Common myeloid progenitor, CD34-positive (primary cell): ENCODE measurements at regions of chr9 and their contacts with region 1.

Region 1: GRCh38 chr9:89549031-89549644 is 51.2 kb upstream of the SEMA4D start:
- DNase-seq: peak; percentile 81 to 88 (median 83)
- H3K4me3 ChIP-seq: no peak overlapping the region
- H3K27ac ChIP-seq: no peak overlapping the region
- H3K4me1 ChIP-seq: peaks cover 0 to 21% (median 12%) of the 10 kb centered on the region in 4 experiments
- H3K27me3 ChIP-seq: no peaks in the 10 kb centered on the region

Region 2: DNA sequence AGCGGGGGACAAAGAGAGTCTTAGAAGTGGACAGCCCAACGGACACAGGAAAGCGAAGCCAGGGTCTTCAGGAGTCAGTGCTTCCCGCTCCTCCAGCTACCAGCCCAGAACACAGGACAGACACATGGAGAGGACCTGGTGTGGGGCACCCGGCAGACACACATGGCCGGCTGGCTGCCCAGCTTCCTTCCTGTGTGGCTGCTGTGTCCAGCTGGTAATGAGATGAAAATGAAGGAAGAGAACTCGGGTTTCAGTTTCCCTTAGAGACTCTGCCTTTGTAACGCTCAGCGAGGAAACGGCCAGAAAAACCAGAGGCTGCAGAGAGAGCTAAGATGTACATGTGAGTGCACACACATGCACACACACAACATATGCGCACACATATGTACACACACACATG is 143.3 kb before region 1 on chr9:
- CTCF ChIA-PET with region 1: interaction called, 10 read pairs
- POLR2A ChIA-PET with region 1: no interaction called
- DNase-seq: peak in 2 of 3 donors; percentile 68 to 69
- H3K4me3 ChIP-seq: peak overlapping the region in 3 of 7 experiments; percentile 15 to 35 (median 29)
- H3K27ac ChIP-seq: peak overlapping the region; percentile 10 to 60
- H3K4me1 ChIP-seq: peaks cover 29 to 81% (median 70%) of the 10 kb centered on the region in 4 experiments
- H3K27me3 ChIP-seq: no peaks in the 10 kb centered on the region

Region 3: DNA sequence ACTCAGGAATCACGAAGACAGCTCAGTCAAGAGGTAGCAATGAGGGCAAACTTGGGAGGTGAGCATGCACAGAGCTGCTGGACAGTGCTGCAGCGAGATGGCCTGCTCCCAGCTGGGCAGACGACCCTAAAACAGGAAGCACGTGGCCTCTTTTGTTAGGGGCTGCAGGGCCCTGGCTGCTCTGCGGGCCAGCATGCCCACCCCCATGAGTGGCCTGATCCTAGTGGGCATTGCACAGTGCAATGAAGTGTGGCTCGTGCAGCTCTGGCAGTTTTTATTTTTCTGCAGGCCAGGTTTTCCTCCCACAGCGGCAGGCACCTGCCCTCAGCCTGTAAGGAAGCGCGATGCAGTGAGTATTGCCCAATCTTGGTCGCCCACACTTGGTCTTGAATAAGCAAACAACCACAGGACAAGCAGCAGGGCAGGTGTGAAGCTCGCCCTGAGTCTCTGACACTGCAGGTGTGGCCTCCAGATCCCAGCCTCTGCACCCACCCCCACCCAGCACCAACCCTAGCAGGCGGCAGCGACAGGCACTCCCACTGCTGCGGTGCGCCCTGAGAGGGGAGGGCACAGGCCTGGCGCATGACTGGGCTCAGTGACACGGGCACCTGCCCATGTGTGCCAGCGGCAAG is 112.0 kb before region 1 on chr9:
- CTCF ChIA-PET with region 1: interaction called, 106 read pairs
- POLR2A ChIA-PET with region 1: no interaction called
- DNase-seq: peak in 2 of 3 donors; percentile 66 to 72
- H3K4me3 ChIP-seq: no peak overlapping the region
- H3K27ac ChIP-seq: no peak overlapping the region
- H3K4me1 ChIP-seq: peaks cover 0 to 64% (median 56%) of the 10 kb centered on the region in 4 experiments
- H3K27me3 ChIP-seq: no peaks in the 10 kb centered on the region

Region 4: GRCh38 chr9:89461265-89461664 is 87.9 kb before region 1 on chr9:
- CTCF ChIA-PET with region 1: interaction called, 16 read pairs
- POLR2A ChIA-PET with region 1: no interaction called
- DNase-seq: peak in 2 of 3 donors; percentile 54 to 75
- H3K4me3 ChIP-seq: no peak overlapping the region
- H3K27ac ChIP-seq: no peak overlapping the region
- H3K4me1 ChIP-seq: peaks cover 20 to 84% (median 73%) of the 10 kb centered on the region in 4 experiments
- H3K27me3 ChIP-seq: no peaks in the 10 kb centered on the region

Region 5: DNA sequence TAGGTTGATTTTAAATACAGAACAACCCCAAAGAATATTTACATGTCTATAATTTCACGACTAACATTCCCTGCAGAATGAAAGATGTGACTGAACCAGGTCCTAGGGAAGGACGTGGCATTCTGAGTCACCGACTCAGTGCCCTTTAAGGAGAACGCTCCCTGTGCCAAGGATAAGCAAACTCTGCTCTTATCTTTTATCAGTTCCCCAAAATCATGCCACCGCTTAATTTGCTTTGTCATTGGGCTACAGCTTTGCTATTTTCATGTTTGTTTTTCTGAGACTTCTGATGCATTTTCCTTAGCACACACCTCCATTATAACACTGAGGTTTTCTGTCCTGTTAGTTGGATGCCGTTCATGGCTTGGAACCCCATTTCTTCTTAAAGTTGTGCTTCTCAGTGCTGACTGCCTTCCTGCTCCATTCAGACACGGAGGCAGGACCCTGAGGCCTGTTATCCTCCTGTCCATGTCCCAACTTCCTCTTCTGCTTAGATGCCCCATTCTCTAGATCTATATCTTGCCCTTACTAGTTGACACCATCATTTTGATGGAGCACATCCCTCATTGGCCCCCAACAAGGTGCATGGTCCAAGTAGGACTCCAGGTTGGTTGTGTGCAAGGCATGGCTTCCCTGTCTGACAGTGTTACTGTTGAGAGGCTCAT is 40.1 kb before region 1 on chr9:
- CTCF ChIA-PET with region 1: interaction called, 23 read pairs
- POLR2A ChIA-PET with region 1: no interaction called
- DNase-seq: peak; percentile 70 to 87 (median 78)
- H3K4me3 ChIP-seq: no peak overlapping the region
- H3K27ac ChIP-seq: no peak overlapping the region
- H3K4me1 ChIP-seq: peaks cover 10 to 43% (median 30%) of the 10 kb centered on the region in 4 experiments
- H3K27me3 ChIP-seq: no peaks in the 10 kb centered on the region